Heart left ventricle (tissue), 16 donors: ENCODE measurements at regions of chrX and their contacts with region 1.

Region 1: DNA sequence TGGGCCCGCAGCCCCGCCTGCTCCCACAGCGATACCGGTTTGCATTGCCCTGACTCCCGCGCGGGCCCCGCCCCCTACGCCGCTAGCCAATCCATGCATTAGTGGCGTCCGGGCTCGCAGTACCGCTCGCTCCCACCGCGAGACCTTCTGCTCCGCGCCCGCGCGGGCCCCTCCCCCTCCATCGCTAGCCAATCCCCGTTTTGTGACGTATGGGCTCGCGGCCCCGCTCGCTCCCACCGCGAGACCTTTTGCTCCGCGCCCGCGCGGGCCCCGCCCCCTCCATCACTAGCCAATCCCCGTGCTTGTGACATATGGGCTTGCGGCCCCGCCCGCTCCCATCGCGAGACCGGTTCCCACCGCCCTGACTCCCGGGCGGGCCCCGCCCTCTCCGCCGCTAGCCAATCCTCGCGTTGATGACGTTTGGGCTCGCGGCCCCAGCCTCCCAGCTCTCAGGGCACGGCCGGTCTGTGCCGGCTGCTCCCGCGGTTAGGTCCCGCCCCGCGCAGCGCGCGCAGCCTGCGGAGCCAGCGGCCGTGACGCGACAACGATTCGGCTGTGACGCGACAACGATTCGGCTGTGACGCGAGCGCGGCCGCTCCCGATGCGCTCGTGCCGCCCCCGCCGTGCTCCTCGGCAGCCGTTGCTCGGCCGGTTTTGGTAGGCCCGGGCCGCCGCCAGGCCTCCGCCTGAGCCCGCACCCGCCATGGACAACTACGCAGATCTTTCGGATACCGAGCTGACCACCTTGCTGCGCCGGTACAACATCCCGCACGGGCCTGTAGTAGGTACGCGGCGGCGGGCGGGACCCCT is at the start of gene EMD:
- DNase-seq: peak; percentile 96 to 99 (median 98)
- ATAC-seq: peak; percentile 90 to 93 (median 93)
- H3K4me3 ChIP-seq: peak within 1 kb of the TSS; percentile 67 to 97 (median 82)
- H3K27ac ChIP-seq: peak within 1 kb of the TSS; percentile 95 to 100 (median 98)
- H3K4me1 ChIP-seq: peaks cover 0 to 29% (median 11%) of the 10 kb centered on the region in 12 donors
- H3K27me3 ChIP-seq: no peaks in the 10 kb centered on the region
- CTCF ChIP-seq: no peak
- POLR2A ChIP-seq: peak; percentile 4 to 82
- total RNA-seq, gene EMD: 37.6 to 76.8 (median 52.8) TPM

Region 2: DNA sequence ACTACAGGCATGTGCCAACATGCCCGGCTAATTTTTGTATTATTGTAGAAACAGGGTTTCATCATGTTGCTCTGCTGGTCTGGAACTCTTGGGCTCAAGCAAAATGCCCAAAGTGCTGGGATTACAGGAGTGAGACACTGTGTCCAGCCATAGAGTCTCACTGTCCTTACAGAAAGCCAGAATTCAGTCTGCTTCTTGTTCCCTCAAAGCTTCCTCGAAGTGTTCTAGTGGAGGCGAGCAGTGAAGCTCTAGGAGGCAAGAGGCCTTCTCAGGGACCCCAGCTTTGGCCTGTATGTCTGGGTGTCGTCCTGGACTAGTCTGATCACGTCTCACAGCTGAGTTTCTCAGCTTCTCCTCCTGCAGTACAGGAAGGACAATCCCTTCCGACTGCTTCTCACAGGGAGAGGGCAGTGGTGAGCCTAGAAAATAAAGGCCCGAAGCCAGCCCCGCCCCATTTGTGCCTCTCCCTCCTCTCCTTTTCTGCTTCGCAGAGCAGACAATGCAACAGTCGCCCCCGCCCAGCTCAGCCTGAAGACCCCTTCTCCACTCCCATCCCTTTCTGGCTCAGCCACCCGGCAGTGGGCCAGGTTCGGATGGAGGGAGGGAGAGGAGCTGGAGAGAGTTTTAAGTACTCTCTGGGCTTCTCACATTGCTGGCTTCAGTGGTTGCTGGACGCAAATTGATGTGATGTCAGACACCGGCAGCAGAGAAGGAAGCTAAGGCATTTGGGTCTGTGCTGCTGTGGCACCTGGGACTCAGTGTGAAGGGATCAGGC is 148.1 kb after region 1 on chrX:
- intact Hi-C with region 1: loop called in 2 of 10 experiments (anchors 5 kb)
- DNase-seq: peak; percentile 73 to 83 (median 81)
- ATAC-seq: peak; percentile 85 to 93 (median 88)
- H3K4me3 ChIP-seq: peak overlapping the region in 10 of 12 donors; percentile 29 to 52 (median 38)
- H3K27ac ChIP-seq: peak overlapping the region in 11 of 12 donors; percentile 47 to 83 (median 77)
- H3K4me1 ChIP-seq: peaks cover 0 to 9% (median 2%) of the 10 kb centered on the region in 12 donors
- H3K27me3 ChIP-seq: peaks cover 0 to 11% (median 0%) of the 10 kb centered on the region in 9 donors
- CTCF ChIP-seq: peak in 11 of 12 donors; percentile 25 to 70 (median 56)
- POLR2A ChIP-seq: no peak